HepG2 (cell line): ENCODE measurements at regions of chr2 and their contacts with region 1.

Region 1: GRCh38 chr2:64595397-64596160 is 58.1 kb downstream of the SERTAD2 start:
- DNase-seq: peak; percentile 40
- ATAC-seq: peak; percentile 71
- H3K4me3 ChIP-seq: no peak overlapping the region
- H3K27ac ChIP-seq: no peak overlapping the region
- H3K4me1 ChIP-seq: peaks cover 12% of the 10 kb centered on the region
- H3K27me3 ChIP-seq: peaks cover 0 to 2% of the 10 kb centered on the region in 2 experiments; a peak in 1 of 5 replicates
- CTCF ChIP-seq: peak; percentile 78
- EP300 ChIP-seq: no peak
- POLR2A ChIP-seq: no peak
- RAD21 ChIP-seq: peak; percentile 45

Region 2: DNA sequence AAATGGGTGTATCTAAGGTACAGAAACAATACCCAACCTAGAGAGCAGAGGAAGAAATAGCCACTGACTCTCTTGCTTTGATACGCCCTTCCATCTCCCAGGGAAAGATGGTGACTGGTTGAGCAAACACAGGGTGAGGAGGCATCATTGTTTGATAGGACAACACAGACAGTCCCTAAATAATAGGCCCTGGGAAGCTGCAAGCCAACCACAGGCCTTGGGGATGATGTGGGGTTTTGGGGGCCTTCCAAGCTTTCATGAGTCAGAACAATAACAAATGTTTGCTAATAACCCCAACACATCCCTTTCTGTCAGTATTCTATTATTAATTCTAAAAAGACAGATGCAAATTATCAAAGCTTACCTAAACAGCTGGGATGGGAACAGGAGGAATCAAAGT is 131.8 kb before region 1 on chr2:
- CTCF ChIA-PET with region 1: no interaction called
- POLR2A ChIA-PET with region 1: no interaction called
- in situ Hi-C with region 1: no loop called
- intact Hi-C with region 1: no loop called
- DNase-seq: no peak
- ATAC-seq: no peak
- H3K4me3 ChIP-seq: no peak overlapping the region
- H3K27ac ChIP-seq: no peak overlapping the region
- H3K4me1 ChIP-seq: 0 out of 2 replicates have a peak, but pooled peaks cover 7% of the 10 kb centered on the region
- H3K27me3 ChIP-seq: no peaks in the 10 kb centered on the region
- CTCF ChIP-seq: no peak
- EP300 ChIP-seq: no peak
- POLR2A ChIP-seq: no peak
- RAD21 ChIP-seq: no peak

Region 3: GRCh38 chr2:64865073-64865830 is 269.7 kb after region 1 on chr2:
- CTCF ChIA-PET with region 1: interaction called, 21 read pairs
- POLR2A ChIA-PET with region 1: no interaction called
- in situ Hi-C with region 1: loop called (anchors 5 kb)
- intact Hi-C with region 1: no loop called
- DNase-seq: no peak
- ATAC-seq: peak; percentile 90
- H3K4me3 ChIP-seq: peak overlapping the region; percentile 78 to 86 (median 81)
- H3K27ac ChIP-seq: no peak overlapping the region
- H3K4me1 ChIP-seq: peaks cover 30% of the 10 kb centered on the region
- H3K27me3 ChIP-seq: peaks cover 5 to 61% of the 10 kb centered on the region in 2 experiments
- CTCF ChIP-seq: peak; percentile 60; the same call in 1 of the 2 replicates
- EP300 ChIP-seq: no peak
- POLR2A ChIP-seq: no peak
- RAD21 ChIP-seq: peak; percentile 98

Region 4: DNA sequence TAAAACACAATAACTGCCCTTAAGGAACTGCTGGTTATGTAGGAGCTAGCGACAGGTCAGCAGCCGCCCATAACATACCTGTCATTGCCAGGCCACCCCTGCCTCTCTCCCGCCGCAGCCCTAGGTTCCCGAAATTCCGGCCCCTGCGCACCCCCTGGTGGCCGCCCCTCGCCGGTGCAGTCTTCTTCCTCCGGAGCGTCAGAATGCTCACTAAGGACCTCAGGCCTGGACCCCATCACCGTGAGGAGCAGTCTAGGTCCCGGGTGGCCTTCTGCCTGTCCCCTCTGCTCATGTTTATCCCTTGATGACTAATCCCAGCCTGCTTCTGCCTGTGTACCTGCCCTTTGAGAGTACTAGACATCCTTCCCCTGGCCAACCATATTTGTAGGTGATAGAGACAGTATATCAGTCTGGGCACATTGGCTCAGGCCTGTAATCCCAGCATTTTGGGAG is 277.9 kb after region 1 on chr2:
- CTCF ChIA-PET with region 1: interaction called, 13 read pairs
- POLR2A ChIA-PET with region 1: no interaction called
- in situ Hi-C with region 1: no loop called
- intact Hi-C with region 1: loop called (anchors 1 kb)
- DNase-seq: peak; percentile 53
- ATAC-seq: peak; percentile 96
- H3K4me3 ChIP-seq: peak overlapping the region in 1 of 3 experiments; percentile 32; a peak in 1 of 6 replicates
- H3K27ac ChIP-seq: no peak overlapping the region
- H3K4me1 ChIP-seq: 0 out of 2 replicates have a peak, but pooled peaks cover 8% of the 10 kb centered on the region
- H3K27me3 ChIP-seq: peaks cover 0 to 13% of the 10 kb centered on the region in 2 experiments; a peak in 2 of 5 replicates
- CTCF ChIP-seq: peak; percentile 99
- EP300 ChIP-seq: no peak
- POLR2A ChIP-seq: no peak
- RAD21 ChIP-seq: peak; percentile 95